Pancreas (tissue), 10 donors: ENCODE measurements at regions of chr5 and their contacts with region 1.

Region 1: DNA sequence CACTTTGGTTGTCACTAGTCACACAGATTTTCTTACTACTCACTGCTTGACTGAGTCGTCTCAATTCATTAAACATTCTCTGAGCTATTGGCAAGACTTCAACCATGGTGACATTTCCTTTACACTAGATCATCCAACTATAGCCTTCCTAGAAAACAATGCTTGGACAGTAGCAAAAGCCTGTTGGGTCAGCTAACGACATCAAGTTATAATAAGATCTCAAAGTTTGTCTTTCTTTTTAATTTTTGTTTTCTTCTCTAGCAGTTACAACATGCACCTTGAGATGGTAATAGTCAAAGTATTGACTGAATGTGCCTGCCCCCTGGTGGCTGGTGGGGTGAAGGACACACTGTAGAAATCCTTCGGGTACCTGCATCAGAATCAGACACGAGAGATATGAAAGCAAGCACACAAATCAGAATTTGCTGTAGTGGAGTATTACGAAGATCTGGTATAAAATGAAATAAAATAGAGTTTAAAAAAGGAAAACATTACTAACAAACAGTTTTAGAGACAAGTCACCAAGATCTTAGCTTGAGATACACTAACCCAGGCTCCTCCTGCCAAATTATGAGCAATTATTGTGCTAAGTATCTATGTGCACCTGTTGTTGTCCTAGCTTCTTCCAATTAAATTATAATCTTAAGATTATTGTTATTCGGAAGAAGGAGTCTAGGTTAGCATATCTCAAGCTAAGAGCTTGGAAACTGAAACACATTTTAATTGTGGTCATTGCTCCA is 81.2 kb downstream of the ARL15 start:
- DNase-seq: peak; percentile 47 to 93 (median 75)
- ATAC-seq: peak; percentile 89 to 98 (median 94)
- H3K4me3 ChIP-seq: no peak overlapping the region
- H3K27ac ChIP-seq: no peak overlapping the region
- H3K4me1 ChIP-seq: no peaks in the 10 kb centered on the region
- H3K27me3 ChIP-seq: no peaks in the 10 kb centered on the region
- CTCF ChIP-seq: peak; percentile 87 to 95 (median 90)

Region 2: DNA sequence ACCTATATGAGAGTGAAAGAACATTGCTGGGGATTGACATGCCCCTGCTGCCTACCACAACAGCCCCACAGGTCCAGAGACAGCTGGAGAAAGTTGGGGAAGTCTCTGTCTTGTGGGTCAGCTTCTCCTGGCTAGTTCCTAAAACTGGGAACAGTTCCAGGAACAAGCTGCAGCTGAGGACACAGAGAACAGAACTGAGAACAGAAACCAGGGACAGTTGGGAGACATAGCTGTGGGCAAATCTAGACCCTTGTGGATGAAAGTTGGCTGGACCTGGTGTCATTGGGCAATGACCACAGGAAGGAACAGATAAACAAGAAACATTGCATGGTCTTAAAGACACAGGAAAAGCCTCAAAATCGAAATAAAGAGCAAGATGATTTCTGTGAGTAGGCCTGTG is 1061.4 kb before region 1 on chr5:
- intact Hi-C with region 1: loop called in 1 of 3 experiments (anchors 10 kb)
- DNase-seq: peak in 1 of 6 donors; percentile 14
- ATAC-seq: peak in 3 of 4 donors; percentile 48 to 59 (median 55)
- H3K4me3 ChIP-seq: no peak overlapping the region
- H3K27ac ChIP-seq: no peak overlapping the region
- H3K4me1 ChIP-seq: no peaks in the 10 kb centered on the region
- H3K27me3 ChIP-seq: no peaks in the 10 kb centered on the region
- CTCF ChIP-seq: no peak

Region 3: DNA sequence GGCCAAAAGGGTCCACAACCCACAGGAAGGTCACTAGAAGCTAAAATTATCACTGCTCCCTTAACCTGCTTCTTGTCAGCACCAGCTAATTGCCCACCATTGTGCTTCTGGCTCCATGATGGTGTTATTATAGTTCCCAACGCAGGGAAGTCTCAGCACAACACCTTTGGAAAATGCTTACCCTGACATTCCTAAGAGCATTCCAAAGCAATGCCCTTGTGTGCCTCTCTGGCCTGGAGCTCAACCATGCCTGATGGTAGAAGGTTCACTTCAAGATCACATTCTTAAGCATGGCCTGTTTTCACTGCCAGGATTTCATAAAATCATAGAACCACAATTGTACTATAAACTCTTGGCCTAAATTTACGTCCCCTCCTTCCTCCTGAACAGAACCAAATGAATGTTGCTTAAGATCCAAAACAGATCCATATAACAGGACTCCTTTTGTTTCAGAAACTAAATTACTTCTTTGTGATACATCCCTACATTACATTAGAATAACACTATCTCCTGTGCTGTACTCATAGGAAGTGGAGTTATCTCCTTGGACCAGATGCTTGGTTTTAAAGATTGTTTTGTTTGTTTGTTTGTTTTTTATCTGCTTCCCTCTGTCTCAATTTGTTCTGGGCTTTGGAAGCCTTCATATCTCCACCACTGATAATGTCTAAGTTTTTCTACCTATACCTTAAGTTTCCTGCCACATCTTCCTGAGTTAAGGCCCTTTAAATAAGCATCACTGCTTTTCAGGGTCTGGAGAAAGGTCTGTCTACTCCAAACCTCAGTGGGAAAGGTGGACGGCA is 49.0 kb after region 1 on chr5:
- intact Hi-C with region 1: no loop called
- DNase-seq: no peak
- ATAC-seq: no peak
- H3K4me3 ChIP-seq: no peak overlapping the region
- H3K27ac ChIP-seq: no peak overlapping the region
- H3K4me1 ChIP-seq: no peaks in the 10 kb centered on the region
- H3K27me3 ChIP-seq: no peaks in the 10 kb centered on the region
- CTCF ChIP-seq: no peak

Region 4: GRCh38 chr5:54719384-54720283 is 490.4 kb after region 1 on chr5:
- intact Hi-C with region 1: no loop called
- DNase-seq: no peak
- ATAC-seq: peak in 1 of 4 donors; percentile 19
- H3K4me3 ChIP-seq: no peak overlapping the region
- H3K27ac ChIP-seq: no peak overlapping the region
- H3K4me1 ChIP-seq: no peaks in the 10 kb centered on the region
- H3K27me3 ChIP-seq: no peaks in the 10 kb centered on the region
- CTCF ChIP-seq: no peak